ENCODE measurements at regions of chr7 and their contacts with region 1.

Region 1: GRCh38 chr7:20560325-20561180 is 54.9 kb upstream of the ABCB5 start:
- DNase-seq: no peak
- H3K4me3 ChIP-seq: no peak overlapping the region
- H3K27ac ChIP-seq: no peak overlapping the region
- H3K4me1 ChIP-seq: peaks cover 0 to 14% of the 10 kb centered on the region in 2 experiments; a peak in 2 of 4 replicates
- H3K27me3 ChIP-seq: no peaks in the 10 kb centered on the region
- CTCF ChIP-seq: no peak
- EP300 ChIP-seq: no peak
- RAD21 ChIP-seq: no peak

Region 2: GRCh38 chr7:20330240-20330927 is 230.2 kb before region 1 on chr7 and contains the start of gene ITGB8:
- CTCF ChIA-PET with region 1: interaction called, 14 read pairs
- POLR2A ChIA-PET with region 1: interaction called, 5 read pairs
- DNase-seq: peak; percentile 86
- H3K4me3 ChIP-seq: peak within 1 kb of the TSS; percentile 88 to 91
- H3K27ac ChIP-seq: peak within 1 kb of the TSS; percentile 88 to 93
- H3K4me1 ChIP-seq: peaks cover 0 to 10% of the 10 kb centered on the region in 2 experiments; a peak in 3 of 4 replicates
- H3K27me3 ChIP-seq: no peaks in the 10 kb centered on the region
- CTCF ChIP-seq: no peak
- EP300 ChIP-seq: peak in 1 of 2 experiments; percentile 23; a peak in 1 of 4 replicates
- RAD21 ChIP-seq: peak; percentile 2; the same call in 1 of the 2 replicates
- polyA plus RNA-seq, gene ITGB8: 0.62 and 0.99 TPM in 2 replicates

Region 3: DNA sequence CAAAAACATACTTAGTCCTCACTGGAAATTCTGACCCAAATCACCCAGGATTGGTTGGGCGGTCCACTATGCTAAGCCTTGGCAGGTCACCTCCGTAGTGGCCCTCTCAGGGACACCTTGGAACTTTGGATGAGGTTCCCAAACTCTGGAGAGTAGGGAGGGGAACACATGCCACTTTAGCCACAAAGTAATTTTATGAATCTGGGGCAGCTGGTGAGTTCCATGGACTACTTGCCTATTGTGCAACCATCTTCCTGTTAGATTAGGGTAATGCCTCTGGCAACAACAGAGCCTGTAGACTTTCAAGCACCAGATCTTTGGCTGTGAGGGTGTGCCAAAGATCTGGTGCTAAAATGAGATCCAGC is 152.1 kb before region 1 on chr7:
- CTCF ChIA-PET with region 1: no interaction called
- POLR2A ChIA-PET with region 1: no interaction called
- DNase-seq: no peak
- H3K4me3 ChIP-seq: no peak overlapping the region
- H3K27ac ChIP-seq: no peak overlapping the region
- H3K4me1 ChIP-seq: peaks cover 0 to 9% of the 10 kb centered on the region in 2 experiments; a peak in 2 of 4 replicates
- H3K27me3 ChIP-seq: no peaks in the 10 kb centered on the region
- CTCF ChIP-seq: no peak
- EP300 ChIP-seq: no peak
- RAD21 ChIP-seq: no peak

Region 4: GRCh38 chr7:20998309-20998708 is 437.8 kb after region 1 on chr7:
- CTCF ChIA-PET with region 1: no interaction called
- POLR2A ChIA-PET with region 1: no interaction called
- DNase-seq: no peak
- H3K4me3 ChIP-seq: no peak overlapping the region
- H3K27ac ChIP-seq: no peak overlapping the region
- H3K4me1 ChIP-seq: no peaks in the 10 kb centered on the region
- H3K27me3 ChIP-seq: no peaks in the 10 kb centered on the region
- CTCF ChIP-seq: no peak
- EP300 ChIP-seq: no peak
- RAD21 ChIP-seq: no peak